A673 (cell line): ENCODE measurements at regions of chr3 and their contacts with region 1.

Region 1: DNA sequence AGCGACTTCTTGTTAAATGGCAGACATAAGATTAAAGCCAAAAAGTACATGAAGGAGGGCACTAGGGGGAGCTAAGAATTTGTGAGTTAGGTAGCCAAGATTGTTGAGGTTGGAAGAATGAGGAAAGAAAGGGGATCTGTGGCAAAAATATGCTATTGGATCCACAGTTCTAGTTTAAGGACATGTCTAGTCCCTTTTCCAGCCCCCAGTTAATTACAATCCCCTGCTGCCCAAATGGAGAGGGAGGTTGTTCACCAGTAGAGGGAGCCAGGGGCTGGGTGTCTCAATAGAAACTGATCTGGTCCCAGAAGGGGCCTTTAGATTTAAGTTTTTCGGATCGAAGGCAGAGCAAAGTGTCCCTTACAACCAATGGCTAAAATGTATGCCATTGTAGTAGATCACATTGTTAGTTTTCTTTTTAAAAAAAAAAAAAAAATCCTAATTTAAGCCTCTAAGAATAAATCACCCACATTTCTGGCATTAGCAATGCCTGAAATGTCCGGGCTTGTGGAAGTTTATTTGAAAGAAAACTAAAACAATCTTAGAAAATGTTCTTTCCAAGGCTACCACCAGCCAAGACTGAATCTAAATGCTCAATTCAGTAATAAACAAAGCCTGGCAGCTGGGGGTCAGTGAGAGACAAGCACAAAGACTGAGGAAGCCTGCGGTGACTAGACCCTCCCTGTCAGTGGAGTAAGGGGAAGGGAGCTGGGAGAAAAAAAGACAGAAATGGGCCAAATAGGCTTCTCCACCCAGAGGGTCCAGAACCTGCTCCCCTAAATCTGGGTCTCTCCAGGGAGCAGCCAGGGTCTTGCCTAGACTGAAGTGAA is 7.1 kb downstream of the COL8A1 start:
- DNase-seq: peak; percentile 69
- H3K4me3 ChIP-seq: no peak overlapping the region
- H3K27ac ChIP-seq: no peak overlapping the region
- H3K4me1 ChIP-seq: peaks cover 25% of the 10 kb centered on the region
- H3K27me3 ChIP-seq: peaks cover 15% of the 10 kb centered on the region
- CTCF ChIP-seq: peak; percentile 90

Region 2: DNA sequence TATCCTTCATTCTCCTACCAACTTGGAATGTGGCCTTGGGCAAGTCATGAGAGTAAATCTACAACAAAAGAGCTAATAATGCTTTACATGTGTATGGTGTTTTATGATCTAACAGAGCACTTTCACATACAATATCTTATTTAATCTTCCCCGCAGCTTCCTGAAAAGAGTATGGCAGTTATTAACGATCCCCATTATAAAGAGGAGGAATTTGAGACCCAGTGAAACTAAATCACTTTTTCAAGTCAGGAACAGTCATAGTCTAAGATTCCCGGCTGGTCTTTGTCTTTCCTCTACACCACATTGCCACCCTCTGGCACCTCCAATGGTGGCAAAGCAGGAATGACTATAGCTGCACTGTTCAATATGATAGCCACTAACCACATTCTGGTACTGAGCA is 102.4 kb after region 1 on chr3:
- CTCF ChIA-PET with region 1: interaction called, 9 read pairs
- POLR2A ChIA-PET with region 1: no interaction called
- intact Hi-C with region 1: loop called (anchors 2 kb)
- DNase-seq: peak; percentile 83
- H3K4me3 ChIP-seq: no peak overlapping the region
- H3K27ac ChIP-seq: no peak overlapping the region
- H3K4me1 ChIP-seq: peaks cover 5% of the 10 kb centered on the region
- H3K27me3 ChIP-seq: no peaks in the 10 kb centered on the region
- CTCF ChIP-seq: peak; percentile 66

Region 3: DNA sequence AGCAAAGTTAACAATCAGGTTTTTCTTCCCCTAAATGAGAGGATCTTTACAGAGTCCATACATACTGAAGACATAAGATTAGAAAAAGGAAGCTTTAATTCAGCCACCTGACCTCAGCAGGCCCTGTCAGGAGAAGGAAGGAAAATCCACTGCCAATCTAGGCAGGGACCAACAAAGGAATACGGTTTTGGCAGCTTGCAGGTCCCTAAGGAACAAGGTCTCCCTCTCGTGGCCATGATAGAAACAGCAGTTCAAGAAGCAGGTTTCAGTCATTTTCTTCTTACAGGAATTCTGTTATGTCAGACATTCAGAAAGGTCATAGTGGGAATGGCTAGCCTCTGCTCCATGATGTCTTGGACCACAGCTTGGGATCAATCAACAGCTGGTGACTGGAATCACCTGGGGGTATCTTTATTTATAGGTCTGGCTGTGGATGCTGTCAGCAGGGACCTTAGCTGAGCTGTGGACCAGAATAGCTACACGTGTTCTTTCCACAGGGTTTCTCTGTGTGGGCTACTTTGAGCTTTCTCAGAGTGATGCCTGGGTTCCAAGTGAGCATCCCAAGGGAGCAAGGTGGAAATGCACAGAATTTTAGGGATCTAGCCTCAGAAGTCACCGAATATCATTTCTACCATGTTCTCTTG is 162.8 kb after region 1 on chr3:
- CTCF ChIA-PET with region 1: no interaction called
- POLR2A ChIA-PET with region 1: no interaction called
- intact Hi-C with region 1: loop called (anchors 5 kb)
- DNase-seq: peak; percentile 76
- H3K4me3 ChIP-seq: no peak overlapping the region
- H3K27ac ChIP-seq: no peak overlapping the region
- H3K4me1 ChIP-seq: no peaks in the 10 kb centered on the region
- H3K27me3 ChIP-seq: no peaks in the 10 kb centered on the region
- CTCF ChIP-seq: peak; percentile 87